MCF 10A (cell line): ENCODE measurements at regions of chr4 and their contacts with region 1.

Region 1: DNA sequence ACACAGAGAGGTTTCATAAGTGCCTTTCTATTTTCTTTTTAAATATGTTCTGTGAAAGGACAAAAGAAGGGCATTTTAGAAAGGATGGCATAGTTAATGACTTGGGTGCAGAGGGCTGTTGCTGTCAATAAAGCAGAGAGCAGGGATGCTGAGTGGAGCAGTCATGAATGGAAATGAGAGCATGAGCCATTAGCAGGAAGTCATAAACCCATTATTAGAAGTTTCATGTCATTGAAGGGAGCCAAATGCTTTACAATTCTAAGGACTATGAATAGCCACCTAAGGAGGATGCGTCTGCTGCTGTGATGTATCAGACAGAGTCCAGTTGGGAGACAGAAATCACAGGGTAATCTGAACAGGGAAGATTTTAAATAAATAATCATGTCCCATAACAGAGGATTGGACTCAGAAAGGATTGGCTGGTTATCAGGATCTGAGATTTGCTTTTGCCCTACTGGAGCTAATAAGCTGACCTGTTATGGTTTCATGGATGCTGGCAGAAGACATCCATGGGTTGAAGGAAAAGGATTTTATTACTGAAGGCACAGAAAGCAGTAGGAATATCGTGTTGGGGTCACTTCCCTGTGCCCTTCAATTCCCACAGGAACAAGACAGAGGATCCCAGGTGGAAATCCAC is 47.5 kb upstream of the WDR19 start:
- DNase-seq: no peak
- H3K4me3 Mint-ChIP-seq: no peak overlapping the region
- H3K27ac Mint-ChIP-seq: peak overlapping the region; percentile 76
- H3K4me1 Mint-ChIP-seq: no peaks in the 10 kb centered on the region
- H3K27me3 Mint-ChIP-seq: no peaks in the 10 kb centered on the region
- CTCF ChIP-seq: no peak

Region 2: DNA sequence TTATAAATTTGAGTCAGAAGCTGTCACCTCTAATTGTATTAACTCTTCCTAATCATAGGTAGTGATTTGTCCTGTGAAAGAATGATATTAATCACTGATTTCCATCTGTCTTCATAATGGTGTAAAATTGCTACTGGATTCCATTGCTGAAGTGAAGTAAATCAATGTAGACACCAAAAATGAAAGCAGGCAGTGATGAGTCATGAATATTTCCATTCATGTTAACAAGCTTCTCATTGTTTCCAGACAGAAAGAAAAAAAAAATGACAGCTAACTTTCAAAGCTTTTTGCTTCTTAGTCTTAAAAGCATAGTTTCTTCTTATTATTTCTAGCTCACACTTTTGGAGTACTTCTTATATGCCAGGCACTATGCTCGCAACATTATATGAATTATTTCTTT is 245.7 kb before region 1 on chr4:
- CTCF ChIA-PET with region 1: interaction called, 14 read pairs
- POLR2A ChIA-PET with region 1: no interaction called
- intact Hi-C with region 1: no loop called
- DNase-seq: peak; percentile 64
- H3K4me3 Mint-ChIP-seq: peak overlapping the region; percentile 21
- H3K27ac Mint-ChIP-seq: peak overlapping the region; percentile 49
- H3K4me1 Mint-ChIP-seq: peaks cover 6% of the 10 kb centered on the region
- H3K27me3 Mint-ChIP-seq: no peaks in the 10 kb centered on the region
- CTCF ChIP-seq: no peak

Region 3: GRCh38 chr4:38902695-38903094 is 232.1 kb before region 1 on chr4:
- CTCF ChIA-PET with region 1: interaction called, 93 read pairs
- POLR2A ChIA-PET with region 1: interaction called, 6 read pairs
- intact Hi-C with region 1: loop called (anchors 1 kb)
- DNase-seq: peak; percentile 47
- H3K4me3 Mint-ChIP-seq: no peak overlapping the region
- H3K27ac Mint-ChIP-seq: no peak overlapping the region
- H3K4me1 Mint-ChIP-seq: no peaks in the 10 kb centered on the region
- H3K27me3 Mint-ChIP-seq: no peaks in the 10 kb centered on the region
- CTCF ChIP-seq: peak; percentile 55

Region 4: DNA sequence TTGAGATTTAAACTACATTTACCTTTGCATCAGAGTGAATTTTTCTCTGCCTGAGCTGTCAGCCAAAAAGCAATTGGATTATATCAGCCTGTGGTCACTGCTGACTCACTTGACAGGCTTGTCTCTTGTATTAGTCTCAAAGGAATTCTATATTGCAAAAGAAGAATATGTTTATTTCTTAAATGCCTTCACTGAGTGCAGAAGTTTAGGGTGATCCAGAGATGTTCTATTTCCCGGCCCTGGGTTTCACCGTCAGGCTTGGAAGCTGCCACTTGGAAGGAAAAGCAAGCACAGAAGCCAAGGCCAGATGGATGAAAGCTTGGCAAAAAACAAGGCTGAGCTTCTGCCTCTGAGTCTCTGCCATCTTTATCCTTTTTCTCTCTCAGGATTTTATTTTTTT is 186.2 kb before region 1 on chr4:
- CTCF ChIA-PET with region 1: interaction called, 8 read pairs
- POLR2A ChIA-PET with region 1: interaction called, 4 read pairs
- intact Hi-C with region 1: loop called (anchors 2 kb)
- DNase-seq: peak; percentile 76
- H3K4me3 Mint-ChIP-seq: no peak overlapping the region
- H3K27ac Mint-ChIP-seq: peak overlapping the region; percentile 11
- H3K4me1 Mint-ChIP-seq: peaks cover 27% of the 10 kb centered on the region
- H3K27me3 Mint-ChIP-seq: no peaks in the 10 kb centered on the region
- CTCF ChIP-seq: no peak

Region 5: DNA sequence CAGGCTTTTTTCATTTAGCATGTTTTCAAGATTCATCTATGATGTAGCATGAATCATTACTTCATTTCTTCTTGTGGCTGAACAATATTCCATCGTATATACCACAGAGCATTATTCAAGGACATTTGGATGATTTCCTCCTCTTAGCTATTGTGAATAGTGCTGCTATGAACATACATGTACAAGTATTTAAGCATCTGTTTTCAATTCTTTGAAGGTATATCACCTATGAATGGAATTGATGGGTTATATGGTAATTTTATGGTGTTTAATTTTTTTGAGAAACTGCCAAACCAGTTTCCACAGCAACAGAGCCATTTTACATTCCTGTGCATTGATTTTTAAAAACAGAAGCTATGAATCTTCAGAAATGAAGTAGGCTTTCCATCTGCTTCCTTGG is 11.4 kb after region 1 on chr4:
- CTCF ChIA-PET with region 1: interaction called, 22 read pairs
- POLR2A ChIA-PET with region 1: no interaction called
- intact Hi-C with region 1: no loop called
- DNase-seq: no peak
- H3K4me3 Mint-ChIP-seq: no peak overlapping the region
- H3K27ac Mint-ChIP-seq: no peak overlapping the region
- H3K4me1 Mint-ChIP-seq: no peaks in the 10 kb centered on the region
- H3K27me3 Mint-ChIP-seq: no peaks in the 10 kb centered on the region
- CTCF ChIP-seq: no peak